ENCODE measurements at regions of chr14 and their contacts with region 1.

Region 1: DNA sequence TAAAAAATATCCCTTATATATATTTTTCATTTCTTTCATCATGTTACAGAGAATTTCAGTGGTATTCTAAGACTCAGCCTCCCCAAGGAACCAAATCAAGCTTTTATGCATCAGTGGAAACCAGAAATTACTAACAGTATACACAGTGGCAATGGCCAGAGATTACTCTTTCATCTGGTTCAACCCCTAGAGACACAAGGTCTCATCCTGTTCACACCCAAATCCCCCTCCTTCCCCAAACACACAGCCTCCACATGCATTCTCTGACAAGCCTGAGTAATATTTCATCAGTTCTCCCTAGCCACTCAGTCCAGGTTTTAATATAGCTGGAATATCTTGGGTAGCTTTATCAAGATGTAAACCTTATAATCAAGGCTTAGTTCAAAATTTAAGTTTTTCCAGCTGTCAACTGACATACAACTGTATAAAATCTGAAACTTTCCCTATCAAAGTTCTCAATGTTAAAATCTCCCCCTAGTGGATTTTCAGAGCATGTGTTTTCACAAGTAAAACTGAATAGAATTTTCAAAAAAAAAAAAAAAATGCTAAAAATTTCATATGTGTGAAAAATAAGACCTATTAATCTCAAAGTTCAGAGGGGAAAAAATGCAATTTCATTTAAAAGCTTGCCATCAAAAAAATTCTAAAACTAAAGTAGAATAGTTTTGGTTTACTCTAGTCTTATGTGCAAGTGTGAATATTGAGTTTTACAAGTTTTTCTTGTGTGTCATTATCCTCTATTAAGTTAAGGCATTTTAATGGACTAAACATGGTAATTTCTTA is 10.5 kb upstream of the SSTR1 start:
- DNase-seq: peak; percentile 38
- ATAC-seq: peak; percentile 67; the same call in 1 of the 2 replicates
- H3K4me3 ChIP-seq: no peak overlapping the region
- H3K27ac ChIP-seq: no peak overlapping the region
- H3K4me1 ChIP-seq: peaks cover 9% of the 10 kb centered on the region
- H3K27me3 ChIP-seq: no peaks in the 10 kb centered on the region
- CTCF ChIP-seq: peak; percentile 53
- POLR2A ChIP-seq: no peak
- RAD21 ChIP-seq: peak; percentile 53

Region 2: DNA sequence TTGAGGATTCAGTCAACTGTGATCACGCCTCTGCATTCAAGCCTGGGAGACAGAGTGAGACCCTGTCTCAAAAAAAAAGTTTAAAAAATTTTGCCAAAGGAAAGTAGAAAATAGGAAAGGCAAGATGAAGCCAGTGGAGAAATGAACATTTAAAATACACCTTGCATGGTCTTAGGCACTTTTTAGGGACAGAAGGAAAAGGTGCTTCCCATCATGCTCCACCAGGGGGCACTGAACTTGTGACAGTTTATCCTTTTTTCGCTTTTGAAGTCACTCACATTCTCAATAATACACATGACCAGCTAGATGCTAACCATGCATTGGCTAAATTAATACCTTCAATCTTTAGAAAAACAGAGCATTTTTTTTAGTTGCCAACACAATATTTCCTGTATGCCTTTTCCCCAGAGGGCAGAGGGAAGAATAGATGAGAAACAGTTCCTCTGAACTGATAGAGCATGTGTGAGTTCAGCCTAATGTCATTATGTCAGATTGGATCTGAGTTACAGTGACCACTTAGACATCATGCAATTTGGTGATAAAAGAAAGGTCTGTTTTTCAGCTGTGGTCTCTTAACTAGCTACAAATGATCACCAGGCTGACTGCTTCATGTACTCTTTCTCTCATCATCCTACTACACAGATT is 211.2 kb before region 1 on chr14:
- CTCF ChIA-PET with region 1: interaction called, 8 read pairs
- POLR2A ChIA-PET with region 1: no interaction called
- dilution Hi-C with region 1: no loop called
- in situ Hi-C with region 1: no loop called
- intact Hi-C with region 1: loop called (anchors 2 kb)
- DNase-seq: peak; percentile 65
- ATAC-seq: peak; percentile 62; the same call in 1 of the 2 replicates
- H3K4me3 ChIP-seq: no peak overlapping the region
- H3K27ac ChIP-seq: no peak overlapping the region
- H3K4me1 ChIP-seq: no peaks in the 10 kb centered on the region
- H3K27me3 ChIP-seq: no peaks in the 10 kb centered on the region
- CTCF ChIP-seq: peak; percentile 77
- POLR2A ChIP-seq: no peak
- RAD21 ChIP-seq: peak; percentile 70

Region 3: GRCh38 chr14:38143659-38144505 is 53.3 kb before region 1 on chr14:
- CTCF ChIA-PET with region 1: no interaction called
- POLR2A ChIA-PET with region 1: no interaction called
- dilution Hi-C with region 1: no loop called
- in situ Hi-C with region 1: no loop called
- intact Hi-C with region 1: loop called (anchors 5 kb)
- DNase-seq: peak; percentile 92
- ATAC-seq: peak; percentile 76
- H3K4me3 ChIP-seq: peak overlapping the region; percentile 8; the same call in 1 of the 2 replicates
- H3K27ac ChIP-seq: peak overlapping the region; percentile 90
- H3K4me1 ChIP-seq: peaks cover 9% of the 10 kb centered on the region
- H3K27me3 ChIP-seq: no peaks in the 10 kb centered on the region
- CTCF ChIP-seq: no peak
- POLR2A ChIP-seq: peak; percentile 38; the same call in 1 of the 2 replicates
- RAD21 ChIP-seq: no peak

Region 4: DNA sequence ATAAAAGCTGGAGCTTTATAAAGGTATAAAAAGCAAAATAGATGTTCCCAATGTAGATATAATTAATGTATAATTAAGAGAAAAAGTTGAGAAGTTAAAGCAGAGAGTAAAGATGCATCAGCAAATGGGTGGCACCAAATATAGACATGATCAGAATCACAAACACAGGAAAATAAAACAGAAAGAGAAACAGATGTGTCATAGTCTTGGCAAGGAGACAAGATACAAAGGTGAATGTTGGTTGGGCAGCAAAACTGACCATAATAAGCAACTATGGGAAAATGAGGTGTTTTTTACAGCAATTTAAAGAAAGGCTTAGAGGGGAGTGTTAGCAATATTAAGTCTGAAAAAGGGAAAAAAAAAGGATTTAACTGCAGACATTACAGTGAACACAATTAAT is 194.1 kb after region 1 on chr14:
- CTCF ChIA-PET with region 1: interaction called, 10 read pairs
- POLR2A ChIA-PET with region 1: no interaction called
- dilution Hi-C with region 1: no loop called
- in situ Hi-C with region 1: no loop called
- intact Hi-C with region 1: no loop called
- DNase-seq: peak; percentile 59
- ATAC-seq: peak; percentile 57
- H3K4me3 ChIP-seq: no peak overlapping the region
- H3K27ac ChIP-seq: no peak overlapping the region
- H3K4me1 ChIP-seq: peaks cover 5% of the 10 kb centered on the region; the same call in 1 of the 2 replicates
- H3K27me3 ChIP-seq: no peaks in the 10 kb centered on the region
- CTCF ChIP-seq: no peak
- POLR2A ChIP-seq: no peak
- RAD21 ChIP-seq: no peak

Region 5: GRCh38 chr14:38605193-38606114 is 408.3 kb after region 1 on chr14:
- CTCF ChIA-PET with region 1: no interaction called
- POLR2A ChIA-PET with region 1: no interaction called
- dilution Hi-C with region 1: no loop called
- in situ Hi-C with region 1: no loop called
- intact Hi-C with region 1: loop called (anchors 1 kb)
- DNase-seq: no peak
- ATAC-seq: no peak
- H3K4me3 ChIP-seq: no peak overlapping the region
- H3K27ac ChIP-seq: no peak overlapping the region
- H3K4me1 ChIP-seq: no peaks in the 10 kb centered on the region
- H3K27me3 ChIP-seq: no peaks in the 10 kb centered on the region
- CTCF ChIP-seq: 0 out of 2 replicates have a peak, but pooled peaks have one; percentile 7
- POLR2A ChIP-seq: no peak
- RAD21 ChIP-seq: no peak